ENCODE measurements at regions of chr17 and their contacts with region 1.

Region 1: GRCh38 chr17:61551255-61551742 is 39.7 kb downstream of the NACA2 start:
- DNase-seq: peak; percentile 70
- H3K4me3 ChIP-seq: no peak overlapping the region
- H3K27ac ChIP-seq: no peak overlapping the region
- H3K4me1 ChIP-seq: no peaks in the 10 kb centered on the region
- H3K27me3 ChIP-seq: peaks cover 57% of the 10 kb centered on the region

Region 2: DNA sequence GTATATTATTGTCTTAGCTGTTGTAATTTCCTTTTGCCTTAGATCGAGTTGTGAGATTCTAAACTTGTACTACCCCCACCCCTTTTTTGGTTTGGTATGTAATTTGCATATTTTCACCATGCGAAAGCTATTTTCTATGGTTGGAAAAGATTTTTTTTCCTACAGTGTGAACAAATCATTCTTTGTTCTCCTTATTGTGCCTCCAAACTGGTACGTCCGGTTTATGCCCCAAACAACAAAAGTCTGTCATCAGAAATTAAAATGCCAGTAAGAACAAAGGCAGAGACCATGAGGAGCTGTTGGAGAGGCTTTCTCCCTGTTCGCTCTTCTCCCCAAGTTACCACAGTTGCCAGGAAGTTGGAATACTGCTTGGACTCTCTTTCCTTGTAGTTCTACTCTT is 807.5 kb before region 1 on chr17:
- in situ Hi-C with region 1: loop called (anchors 25 kb)
- DNase-seq: peak; percentile 57
- H3K4me3 ChIP-seq: peak overlapping the region; percentile 64
- H3K27ac ChIP-seq: peak overlapping the region; percentile 65
- H3K4me1 ChIP-seq: peaks cover 16% of the 10 kb centered on the region
- H3K27me3 ChIP-seq: no peaks in the 10 kb centered on the region

Region 3: DNA sequence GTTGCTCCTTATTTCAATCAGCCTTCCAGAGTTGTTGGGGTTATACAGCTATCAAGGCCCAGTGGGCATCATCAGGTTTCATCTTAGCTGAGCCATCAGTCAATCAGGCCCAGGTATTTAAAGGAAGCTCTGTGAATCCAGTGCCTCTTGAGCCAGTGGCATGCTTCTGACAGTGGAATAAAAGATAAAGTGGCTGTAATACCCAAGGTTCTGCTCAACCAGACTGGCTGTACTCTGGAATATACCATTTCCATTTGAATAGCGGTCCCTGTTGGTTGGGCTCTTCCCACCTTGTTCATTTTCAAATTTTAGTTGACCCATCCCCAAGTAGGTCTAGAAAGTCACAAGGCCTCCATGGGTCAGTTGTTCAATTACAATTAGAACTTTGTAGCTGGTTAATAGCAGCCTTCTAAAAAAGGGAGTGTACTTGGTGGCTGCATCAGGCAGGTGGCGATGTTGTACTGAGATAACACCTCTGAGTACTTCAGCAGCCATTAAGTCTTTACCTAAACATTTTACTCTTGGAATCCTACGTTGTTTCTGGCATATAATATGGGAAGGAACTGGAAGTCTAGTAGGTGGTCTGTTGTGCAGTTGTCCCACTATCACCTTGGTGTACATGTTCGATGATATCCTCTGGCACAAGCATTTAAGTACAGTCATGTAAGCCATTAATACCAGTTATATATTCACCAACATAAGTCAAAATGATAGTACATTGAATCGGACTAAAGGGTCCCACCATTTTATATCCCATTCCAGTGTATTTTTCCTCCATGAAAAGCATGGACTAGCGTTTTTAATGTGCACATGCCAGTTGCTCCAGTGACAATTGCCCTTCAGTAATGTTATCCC is 579.6 kb before region 1 on chr17:
- in situ Hi-C with region 1: loop called (anchors 25 kb)
- DNase-seq: peak; percentile 74
- H3K4me3 ChIP-seq: no peak overlapping the region
- H3K27ac ChIP-seq: no peak overlapping the region
- H3K4me1 ChIP-seq: peaks cover 7% of the 10 kb centered on the region; the same call in 1 of the 2 replicates
- H3K27me3 ChIP-seq: no peaks in the 10 kb centered on the region

Region 4: DNA sequence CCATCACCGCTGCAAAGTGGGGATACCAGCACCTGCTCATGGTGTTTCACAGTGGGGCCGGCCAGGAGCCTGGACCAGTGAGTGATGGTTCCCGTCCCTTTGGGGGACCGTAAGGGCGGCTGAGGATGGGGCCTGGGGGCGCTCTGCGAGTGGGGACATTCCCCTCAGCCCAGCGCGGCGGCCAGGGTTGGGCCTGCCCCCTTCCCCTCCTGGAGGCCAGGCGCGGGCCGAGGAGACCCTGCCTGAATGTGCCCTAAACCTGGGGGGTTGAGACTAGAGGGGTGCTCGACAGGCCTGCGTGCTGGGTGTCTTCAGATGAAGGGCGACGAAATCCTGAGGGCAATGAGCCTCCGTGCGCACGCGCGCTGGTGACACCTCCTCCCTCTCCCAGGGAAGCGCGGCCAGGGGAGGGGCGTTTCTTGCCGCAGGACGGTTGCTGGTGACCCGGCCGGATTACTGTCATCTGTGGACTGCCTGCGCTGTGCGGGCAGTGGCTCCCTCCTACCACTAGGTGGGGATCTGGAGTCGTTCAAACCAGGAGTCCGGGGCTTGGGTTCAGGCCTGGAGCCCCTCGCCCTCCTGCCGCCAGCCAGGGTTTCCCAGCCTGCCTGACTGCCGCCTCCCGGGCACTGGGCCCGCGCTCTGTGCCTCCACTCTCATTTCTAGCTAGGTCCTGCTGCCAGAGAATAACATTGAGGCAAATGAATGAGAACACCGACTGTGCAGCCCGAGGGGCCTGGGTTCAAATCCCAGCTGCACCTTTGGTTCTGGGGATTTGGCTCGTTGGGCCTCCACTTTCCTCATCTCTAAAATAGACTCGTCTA is 134.5 kb before region 1 on chr17:
- in situ Hi-C with region 1: loop called (anchors 5 kb)
- DNase-seq: peak; percentile 90
- H3K4me3 ChIP-seq: peak overlapping the region; percentile 34
- H3K27ac ChIP-seq: no peak overlapping the region
- H3K4me1 ChIP-seq: peaks cover 8% of the 10 kb centered on the region; the same call in 1 of the 2 replicates
- H3K27me3 ChIP-seq: peaks cover 23% of the 10 kb centered on the region

Measured in GM23248 (cell line).